ENCODE measurements at regions of chr15 and their contacts with region 1.

Region 1: GRCh38 chr15:67240235-67241131 is 14.0 kb downstream of the AAGAB start:
- DNase-seq: no peak
- H3K4me3 Mint-ChIP-seq: peak overlapping the region; percentile 36
- H3K27ac Mint-ChIP-seq: peak overlapping the region; percentile 66
- H3K4me1 Mint-ChIP-seq: peaks cover 45% of the 10 kb centered on the region
- H3K27me3 Mint-ChIP-seq: no peaks in the 10 kb centered on the region

Region 2: DNA sequence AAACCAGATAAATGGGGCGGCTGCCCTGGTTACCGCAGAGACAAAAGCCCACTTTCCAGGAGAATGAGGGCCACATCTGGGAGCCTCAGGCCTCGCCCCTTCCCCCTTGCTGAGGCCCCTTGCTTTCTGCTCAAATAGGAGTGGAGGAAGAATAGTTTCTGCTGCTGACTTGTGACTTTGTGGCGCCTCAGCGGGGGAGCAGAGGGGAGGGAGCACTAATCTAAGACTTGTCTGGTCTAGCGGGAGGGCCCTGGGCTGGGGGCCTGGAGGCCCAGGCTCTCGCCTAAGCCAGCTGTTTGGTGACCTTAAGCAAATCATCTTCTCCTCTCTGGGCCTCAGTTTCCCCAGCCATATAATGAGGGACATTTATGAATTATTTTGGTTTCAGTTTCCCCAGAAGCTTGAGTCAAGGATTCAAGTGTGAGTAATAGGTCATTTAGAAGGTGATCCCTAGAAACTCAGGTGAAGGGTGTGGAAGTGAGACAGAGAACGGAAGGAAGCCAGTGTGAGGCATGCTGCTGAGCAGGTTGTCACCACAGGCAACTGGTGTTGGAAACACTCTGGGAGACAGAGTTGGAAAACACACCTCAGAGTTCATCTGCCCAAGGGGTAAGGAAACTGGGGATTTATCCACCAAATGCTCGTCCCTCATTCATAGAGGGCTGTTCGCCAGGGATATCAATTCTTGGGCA is 201.0 kb before region 1 on chr15:
- intact Hi-C with region 1: loop called (anchors 5 kb)
- DNase-seq: no peak
- H3K4me3 Mint-ChIP-seq: peak overlapping the region; percentile 33
- H3K27ac Mint-ChIP-seq: peak overlapping the region; percentile 24
- H3K4me1 Mint-ChIP-seq: peaks cover 14% of the 10 kb centered on the region
- H3K27me3 Mint-ChIP-seq: no peaks in the 10 kb centered on the region

Region 3: DNA sequence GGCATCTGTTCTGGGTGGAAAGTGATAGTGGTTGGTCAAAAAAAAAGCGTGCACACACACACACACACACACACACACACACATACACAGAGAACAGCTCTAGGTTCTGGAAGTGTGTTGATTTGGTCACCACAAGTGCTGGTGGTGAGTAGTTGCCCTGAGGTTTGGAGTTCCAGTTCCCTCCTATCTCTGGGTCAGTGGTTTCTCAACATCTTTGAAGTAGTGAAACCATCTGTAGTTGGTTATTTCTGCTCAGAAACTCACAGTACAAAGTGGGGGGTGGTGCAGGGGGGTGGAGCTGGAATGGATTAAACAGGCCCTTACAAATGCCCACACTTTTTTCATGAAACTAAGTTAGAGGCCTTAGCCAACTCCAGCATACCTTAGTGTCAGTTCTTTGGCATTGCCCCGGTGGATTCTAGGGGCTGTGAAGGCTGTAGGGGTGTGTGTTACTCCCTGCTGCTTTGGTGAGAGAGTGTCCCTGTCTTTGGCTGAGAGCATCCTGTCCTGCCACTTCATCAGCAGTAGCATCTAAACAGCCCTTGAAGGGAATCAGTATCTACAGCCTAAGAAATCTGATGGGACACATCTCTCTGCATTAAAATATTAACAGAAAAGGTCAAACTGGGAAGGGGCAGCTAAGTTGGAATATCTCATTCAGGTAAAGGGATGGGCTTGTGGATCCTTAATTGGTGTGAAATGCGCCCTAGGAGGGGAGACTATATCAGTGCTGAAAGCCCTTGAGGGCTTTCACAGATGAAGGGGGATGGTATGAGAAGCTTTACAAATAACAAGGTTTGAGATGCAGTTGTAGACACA is 154.5 kb before region 1 on chr15:
- intact Hi-C with region 1: loop called (anchors 1 kb)
- DNase-seq: peak; percentile 44
- H3K4me3 Mint-ChIP-seq: peak overlapping the region; percentile 24
- H3K27ac Mint-ChIP-seq: peak overlapping the region; percentile 74
- H3K4me1 Mint-ChIP-seq: peaks cover 94% of the 10 kb centered on the region
- H3K27me3 Mint-ChIP-seq: no peaks in the 10 kb centered on the region

Region 4: DNA sequence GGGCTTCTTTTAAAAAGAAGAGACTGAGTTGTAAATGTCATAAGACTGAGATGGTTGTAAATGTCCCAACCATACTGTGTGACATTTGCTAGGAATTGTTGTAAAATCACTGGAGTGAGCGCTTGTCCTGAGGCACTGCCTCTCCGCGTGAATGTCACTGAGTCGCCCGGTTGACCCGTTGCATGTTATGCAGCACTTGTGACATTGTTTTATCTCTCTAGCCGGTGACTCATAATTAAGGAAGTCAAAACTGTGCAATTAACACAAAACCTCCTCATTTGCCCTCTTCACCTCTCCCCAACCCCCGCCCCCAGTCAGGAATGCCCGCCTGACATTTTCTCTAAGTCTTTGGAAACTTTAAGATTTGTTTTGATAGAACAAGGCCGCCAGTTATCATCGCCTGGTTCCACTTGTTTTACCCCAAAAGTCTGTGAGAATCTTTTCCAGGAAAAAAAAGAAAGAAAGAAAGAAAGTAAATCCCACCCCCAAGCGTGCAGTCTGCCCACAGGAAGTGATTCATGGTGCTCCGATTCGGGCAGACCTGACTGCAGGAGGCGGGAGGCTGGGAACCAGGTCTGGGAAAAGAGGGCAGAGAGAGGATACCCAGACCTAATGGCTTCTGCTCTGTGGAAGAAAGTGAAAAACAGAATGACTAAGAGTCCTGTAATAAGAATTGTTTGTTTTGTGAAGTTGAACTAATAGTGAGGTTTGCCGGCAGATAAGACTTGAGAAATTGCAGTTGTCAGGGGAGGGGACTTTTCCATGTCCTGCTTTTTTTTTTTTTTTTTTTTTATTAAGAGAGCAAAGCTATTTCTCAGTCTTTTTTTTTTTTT is 90.2 kb before region 1 on chr15:
- intact Hi-C with region 1: loop called (anchors 5 kb)
- DNase-seq: no peak
- H3K4me3 Mint-ChIP-seq: peak overlapping the region; percentile 46
- H3K27ac Mint-ChIP-seq: peak overlapping the region; percentile 71
- H3K4me1 Mint-ChIP-seq: peaks cover 60% of the 10 kb centered on the region
- H3K27me3 Mint-ChIP-seq: no peaks in the 10 kb centered on the region

Region 5: GRCh38 chr15:67254238-67255175 is 14.0 kb after region 1 on chr15 and contains the starts of genes AAGAB and IQCH:
- intact Hi-C with region 1: loop called (anchors 1 kb)
- DNase-seq: peak; percentile 96
- H3K4me3 Mint-ChIP-seq: peak within 1 kb of the TSS; percentile 94
- H3K27ac Mint-ChIP-seq: peak within 1 kb of the TSS; percentile 96
- H3K4me1 Mint-ChIP-seq: peaks cover 36% of the 10 kb centered on the region
- H3K27me3 Mint-ChIP-seq: peaks cover 13% of the 10 kb centered on the region
- total RNA-seq, gene AAGAB: 35.8 and 41.3 TPM in 2 replicates
- total RNA-seq, gene IQCH: 0.68 and 1.7 TPM in 2 replicates

Region 6: GRCh38 chr15:67303490-67304363 is 63.2 kb after region 1 on chr15:
- intact Hi-C with region 1: loop called (anchors 2 kb)
- DNase-seq: no peak
- H3K4me3 Mint-ChIP-seq: no peak overlapping the region
- H3K27ac Mint-ChIP-seq: no peak overlapping the region
- H3K4me1 Mint-ChIP-seq: peaks cover 8% of the 10 kb centered on the region
- H3K27me3 Mint-ChIP-seq: peaks cover 32% of the 10 kb centered on the region

Region 7: GRCh38 chr15:67479781-67480505 is 239.5 kb after region 1 on chr15:
- intact Hi-C with region 1: no loop called
- DNase-seq: no peak
- H3K4me3 Mint-ChIP-seq: no peak overlapping the region
- H3K27ac Mint-ChIP-seq: no peak overlapping the region
- H3K4me1 Mint-ChIP-seq: peaks cover under 1% of the 10 kb centered on the region
- H3K27me3 Mint-ChIP-seq: peaks cover 13% of the 10 kb centered on the region

Measured in activated T-helper 2 cell treated with anti-CD3 and anti-CD28 coated beads, Interferon-gamma antibody, Interleukin-2, Interleukin-4, amounts not matched to agents 10 μg/mL and 5 μg/mL and 100 μg/mL, durations not matched to agents 14 hours and 24 hours and 36 hours (primary cell).